Posterior vena cava (tissue), 2 donors: ENCODE measurements at regions of chr6 and their contacts with region 1.

Region 1: DNA sequence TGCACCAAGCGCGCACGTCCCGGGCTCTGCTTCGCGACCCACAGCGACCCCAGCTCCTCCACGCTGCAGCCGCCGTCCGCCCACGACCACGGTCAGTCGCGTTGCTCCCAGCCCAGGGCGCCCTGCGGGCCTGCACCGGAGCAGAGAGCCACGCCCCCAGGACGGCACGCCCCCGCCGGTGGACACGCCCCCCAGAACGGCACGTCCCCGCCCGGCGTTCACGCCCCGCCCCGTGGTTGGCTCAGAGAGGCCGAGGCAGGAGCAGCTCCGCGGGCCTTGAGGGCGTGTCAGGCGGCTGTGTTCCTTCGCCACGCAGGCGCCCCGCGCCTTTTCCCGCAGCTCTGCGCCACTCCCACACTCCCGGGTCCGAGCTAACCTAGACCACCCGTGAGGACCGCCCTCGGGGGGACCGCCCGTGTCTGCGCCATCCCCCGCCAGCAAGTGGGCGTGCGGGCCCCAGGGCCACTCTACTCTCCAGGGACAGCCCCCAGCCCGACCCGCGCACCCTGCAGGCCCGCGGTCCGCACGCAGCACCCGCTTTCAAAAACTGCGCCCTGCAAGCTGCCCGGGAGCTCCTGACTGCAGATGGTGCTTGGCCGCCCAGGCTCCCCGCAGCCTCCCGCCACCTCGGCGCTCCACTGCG is at the start of gene RNASET2:
- DNase-seq: peak; percentile 99
- total RNA-seq, gene RNASET2: 18.3 to 45.4 TPM

Region 2: DNA sequence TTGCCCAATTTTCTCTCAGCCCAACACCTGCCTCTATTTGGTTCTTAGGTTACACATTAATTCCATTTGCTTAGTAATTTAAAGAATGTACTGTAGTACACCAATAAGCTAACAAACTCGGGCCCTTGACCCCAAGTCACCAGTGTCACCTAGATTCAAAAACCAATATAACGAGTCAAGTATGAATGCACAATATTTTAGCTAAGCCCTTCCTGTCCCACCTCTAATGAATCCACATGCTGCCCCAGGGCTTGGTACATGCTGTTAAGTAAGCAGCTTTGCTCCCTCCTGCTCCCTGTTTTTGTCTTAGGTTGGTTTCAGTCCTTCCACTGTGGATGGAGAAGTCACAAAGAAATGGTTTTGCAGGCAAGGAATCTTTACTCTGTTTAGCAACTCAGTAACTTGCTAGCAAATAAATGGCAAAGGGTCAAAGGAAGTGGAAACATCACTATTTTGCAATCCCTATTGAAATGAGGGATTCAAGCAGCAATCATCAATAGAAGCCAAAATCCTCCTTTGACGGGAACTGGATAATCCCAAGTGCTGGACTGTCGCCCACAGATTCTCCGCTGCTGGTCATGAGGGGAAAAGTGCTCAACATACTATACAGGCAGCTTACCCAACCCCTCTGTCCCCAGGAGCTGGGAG is 568.8 kb before region 1 on chr6:
- intact Hi-C with region 1: loop called in 1 of 2 experiments (anchors 2 kb)
- DNase-seq: no peak

Region 3: DNA sequence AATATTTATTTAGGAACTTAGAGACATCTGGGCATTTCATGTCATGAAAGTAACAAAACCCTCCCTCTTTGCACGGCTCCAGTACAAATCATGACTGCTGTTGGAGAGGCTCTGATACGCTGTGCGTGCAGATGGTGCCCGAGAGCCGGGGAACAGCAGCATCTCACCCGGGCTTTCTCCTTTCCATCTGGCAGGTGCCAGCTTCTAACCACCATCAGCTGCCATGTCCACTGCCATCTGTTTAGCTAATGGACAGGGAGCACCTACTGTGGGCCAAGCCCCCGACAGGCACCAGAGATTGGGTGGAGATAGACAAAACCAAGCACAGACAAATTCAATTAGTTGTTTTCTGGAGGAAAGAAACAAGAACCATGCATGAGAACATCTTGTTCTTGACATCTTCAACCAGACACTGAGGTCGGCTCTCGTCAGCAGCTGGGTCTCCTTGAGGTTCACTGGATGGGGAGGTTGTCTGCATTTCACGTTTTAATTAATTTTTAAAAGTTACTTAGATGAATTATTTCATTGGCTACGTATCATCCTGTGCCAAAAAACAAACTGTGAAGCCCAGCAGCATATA is 1973.4 kb after region 1 on chr6:
- intact Hi-C with region 1: no loop called
- DNase-seq: no peak